ENCODE measurements at regions of chr11 and their contacts with region 1.

Region 1: GRCh38 chr11:29844701-29845379 is 172.0 kb downstream of the KCNA4 start:
- DNase-seq: no peak
- ATAC-seq: peak in 1 of 8 donors; percentile 37
- H3K4me3 ChIP-seq: no peak overlapping the region
- H3K27ac ChIP-seq: no peak overlapping the region
- H3K4me1 ChIP-seq: no peaks in the 10 kb centered on the region
- H3K27me3 ChIP-seq: no peaks in the 10 kb centered on the region
- CTCF ChIP-seq: peak in 6 of 9 donors; percentile 13 to 43 (median 32)

Region 2: GRCh38 chr11:30000986-30001750 is 156.3 kb after region 1 on chr11:
- intact Hi-C with region 1: loop called in 1 of 10 experiments (anchors 10 kb)
- DNase-seq: peak in 1 of 2 donors; percentile 31
- ATAC-seq: peak; percentile 52 to 95 (median 86)
- H3K4me3 ChIP-seq: no peak overlapping the region
- H3K27ac ChIP-seq: peak overlapping the region in 5 of 10 donors; percentile 11 to 54 (median 39)
- H3K4me1 ChIP-seq: peaks cover 0 to 38% (median 6%) of the 10 kb centered on the region in 9 donors
- H3K27me3 ChIP-seq: no peaks in the 10 kb centered on the region
- CTCF ChIP-seq: no peak

Region 3: GRCh38 chr11:30016588-30017363 is 171.9 kb after region 1 on chr11 and contains the start of gene KCNA4:
- intact Hi-C with region 1: loop called in 1 of 10 experiments (anchors 10 kb)
- DNase-seq: peak; percentile 13 to 51
- ATAC-seq: peak; percentile 84 to 96 (median 93)
- H3K4me3 ChIP-seq: peak within 1 kb of the TSS; percentile 35 to 61 (median 50)
- H3K27ac ChIP-seq: peak within 1 kb of the TSS in 5 of 10 donors; percentile 39 to 61 (median 43)
- H3K4me1 ChIP-seq: peaks cover 0 to 6% (median 0%) of the 10 kb centered on the region in 9 donors
- H3K27me3 ChIP-seq: peaks cover 0 to 56% (median 22%) of the 10 kb centered on the region in 7 donors
- CTCF ChIP-seq: peak in 8 of 9 donors; percentile 17 to 53 (median 40)
- total RNA-seq, gene KCNA4: 1.3 to 12.8 (median 7.4) TPM

Region 4: DNA sequence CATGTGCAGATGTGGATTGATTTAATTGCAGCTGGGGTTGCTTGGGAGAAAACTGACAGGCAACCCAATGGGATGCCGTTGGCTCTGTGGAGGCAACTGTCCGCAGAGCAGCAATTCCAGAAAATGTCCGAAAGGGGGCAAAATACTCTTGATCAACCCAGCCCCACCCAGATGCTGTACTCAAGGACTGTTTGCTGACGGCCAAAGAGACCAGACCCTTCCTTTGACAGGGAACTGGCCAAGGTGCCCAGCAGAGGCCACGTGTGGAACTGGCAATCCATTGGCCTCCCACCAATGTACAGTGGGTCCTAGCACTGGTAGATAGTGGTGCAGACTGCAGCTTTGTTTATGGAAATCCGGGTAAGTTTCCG is 201.7 kb after region 1 on chr11:
- intact Hi-C with region 1: loop called in 4 of 10 experiments (anchors 5 to 10 kb)
- DNase-seq: no peak
- ATAC-seq: no peak
- H3K4me3 ChIP-seq: no peak overlapping the region
- H3K27ac ChIP-seq: no peak overlapping the region
- H3K4me1 ChIP-seq: no peaks in the 10 kb centered on the region
- H3K27me3 ChIP-seq: no peaks in the 10 kb centered on the region
- CTCF ChIP-seq: no peak